ENCODE measurements at regions of chr17 and their contacts with region 1.

Region 1: GRCh38 chr17:61230972-61231750 is 168.5 kb upstream of the TBX2 start:
- DNase-seq: no peak
- H3K4me3 ChIP-seq: no peak overlapping the region
- H3K27ac ChIP-seq: no peak overlapping the region
- H3K4me1 ChIP-seq: peaks cover 0 to 9% of the 10 kb centered on the region in 2 donors
- H3K27me3 ChIP-seq: no peaks in the 10 kb centered on the region
- CTCF ChIP-seq: no peak

Region 2: DNA sequence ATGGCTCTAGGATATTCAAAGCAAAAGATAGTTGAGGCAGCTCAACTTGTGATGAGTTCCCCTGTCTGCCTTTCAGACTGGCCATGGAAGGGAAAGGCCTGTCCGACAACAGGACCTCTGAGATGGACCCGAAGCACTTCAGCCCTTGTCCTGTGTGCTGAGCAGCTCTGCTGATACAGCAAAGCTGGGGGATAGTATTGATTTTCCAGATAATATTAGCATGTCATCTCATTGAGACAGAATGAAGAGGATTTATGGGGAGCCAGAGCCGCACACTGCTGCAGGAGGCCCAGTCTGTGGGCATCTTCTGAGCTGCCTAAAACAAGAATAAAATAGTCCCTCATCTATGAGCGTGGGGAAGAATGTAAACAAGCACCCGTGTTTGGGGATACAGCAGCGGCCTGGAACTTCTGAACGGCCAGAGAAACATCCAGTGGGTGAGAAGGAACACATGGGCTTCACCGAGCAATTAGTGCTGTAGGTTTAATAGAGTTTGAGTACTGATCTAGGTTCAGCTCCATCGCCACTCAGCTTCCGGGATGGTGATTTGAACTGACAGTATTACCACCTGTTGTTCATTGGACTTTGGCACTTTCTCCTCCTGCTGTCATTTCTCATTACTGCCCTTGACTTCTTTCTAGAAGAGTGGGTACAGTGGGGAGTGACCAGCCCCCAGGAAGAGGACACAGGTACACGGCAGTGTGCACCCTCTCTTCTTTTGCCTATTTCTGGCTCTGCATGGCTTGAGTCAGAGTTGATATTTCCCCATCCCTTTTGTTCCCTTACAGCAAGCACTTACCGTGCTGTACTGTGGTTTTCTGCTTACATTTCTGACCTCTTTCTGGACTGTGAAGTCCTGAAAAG is 72.0 kb after region 1 on chr17:
- intact Hi-C with region 1: loop called (anchors 1 kb)
- DNase-seq: no peak
- H3K4me3 ChIP-seq: no peak overlapping the region
- H3K27ac ChIP-seq: no peak overlapping the region
- H3K4me1 ChIP-seq: peaks cover 0 to 4% of the 10 kb centered on the region in 2 donors
- H3K27me3 ChIP-seq: no peaks in the 10 kb centered on the region
- CTCF ChIP-seq: no peak

Region 3: DNA sequence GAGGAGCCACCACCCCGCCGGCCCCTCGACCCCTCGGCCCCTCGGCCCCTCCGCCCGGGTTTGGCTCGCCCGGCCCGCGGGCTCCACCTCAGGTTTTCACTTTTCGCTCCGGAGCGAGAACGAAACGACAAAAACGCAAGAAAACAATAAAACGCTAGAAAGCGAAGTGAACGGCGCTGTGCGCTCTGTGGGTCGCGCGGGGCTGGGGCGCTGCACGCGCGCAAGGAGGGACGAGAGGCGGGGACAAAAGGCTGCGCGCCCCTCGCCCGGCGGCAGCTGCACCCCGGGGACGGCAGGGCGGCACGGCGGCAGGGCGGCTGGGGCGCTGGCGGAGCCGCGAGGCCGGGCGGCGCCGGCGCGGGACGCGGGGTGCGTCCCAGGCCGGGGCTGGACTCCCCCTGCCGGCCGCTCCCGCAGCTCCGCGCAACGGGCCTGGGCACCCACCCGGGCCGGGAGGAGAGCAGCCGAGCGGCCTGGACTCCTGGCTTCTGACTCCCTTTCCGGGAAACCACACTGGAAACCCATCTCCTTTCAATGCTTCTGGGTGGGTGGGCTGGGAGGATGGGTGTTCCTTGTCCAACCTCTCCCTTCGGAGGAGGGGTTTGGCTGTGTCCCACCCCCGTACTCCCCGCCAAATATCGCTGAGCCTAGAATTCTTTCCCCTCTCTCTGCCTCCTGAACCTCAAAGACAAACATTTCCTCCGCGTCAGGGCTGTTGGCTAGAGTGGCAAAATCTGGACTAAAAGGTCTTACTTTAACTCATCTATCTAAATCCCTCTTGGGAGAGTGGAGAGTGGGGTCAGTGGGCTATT is 178.3 kb after region 1 on chr17:
- intact Hi-C with region 1: no loop called
- DNase-seq: peak; percentile 7 to 83
- H3K4me3 ChIP-seq: peak overlapping the region; percentile 78 to 80
- H3K27ac ChIP-seq: peak overlapping the region; percentile 94 to 96
- H3K4me1 ChIP-seq: peaks cover 0 to 33% of the 10 kb centered on the region in 2 donors
- H3K27me3 ChIP-seq: no peaks in the 10 kb centered on the region
- CTCF ChIP-seq: peak; percentile 34 to 68 (median 46)